Body of pancreas (tissue), 4 donors: ENCODE measurements at regions of chr7 and their contacts with region 1.

Region 1: GRCh38 chr7:27196287-27196767 is 3.6 kb downstream of the HOXA13 start:
- DNase-seq: peak; percentile 70 to 86 (median 80)
- ATAC-seq: no peak
- H3K4me3 ChIP-seq: no peak overlapping the region
- H3K27ac ChIP-seq: no peak overlapping the region
- H3K4me1 ChIP-seq: peaks cover 44% of the 10 kb centered on the region
- H3K27me3 ChIP-seq: peaks cover 0 to 92% of the 10 kb centered on the region in 2 donors
- CTCF ChIP-seq: peak; percentile 38 to 81 (median 76)
- POLR2A ChIP-seq: no peak

Region 2: GRCh38 chr7:26667500-26668133 is 528.7 kb before region 1 on chr7:
- intact Hi-C with region 1: no loop called
- DNase-seq: peak; percentile 72 to 90 (median 80)
- ATAC-seq: peak; percentile 92
- H3K4me3 ChIP-seq: no peak overlapping the region
- H3K27ac ChIP-seq: no peak overlapping the region
- H3K4me1 ChIP-seq: no peaks in the 10 kb centered on the region
- H3K27me3 ChIP-seq: no peaks in the 10 kb centered on the region
- CTCF ChIP-seq: peak; percentile 59 to 97 (median 93)
- POLR2A ChIP-seq: no peak

Region 3: GRCh38 chr7:26880852-26881251 is 315.5 kb before region 1 on chr7:
- intact Hi-C with region 1: no loop called
- DNase-seq: no peak
- ATAC-seq: no peak
- H3K4me3 ChIP-seq: no peak overlapping the region
- H3K27ac ChIP-seq: no peak overlapping the region
- H3K4me1 ChIP-seq: no peaks in the 10 kb centered on the region
- H3K27me3 ChIP-seq: peaks cover 0 to 2% of the 10 kb centered on the region in 2 donors
- CTCF ChIP-seq: no peak
- POLR2A ChIP-seq: no peak

Region 4: GRCh38 chr7:27389496-27389895 is 193.2 kb after region 1 on chr7:
- intact Hi-C with region 1: no loop called
- DNase-seq: no peak
- ATAC-seq: no peak
- H3K4me3 ChIP-seq: no peak overlapping the region
- H3K27ac ChIP-seq: no peak overlapping the region
- H3K4me1 ChIP-seq: no peaks in the 10 kb centered on the region
- H3K27me3 ChIP-seq: no peaks in the 10 kb centered on the region
- CTCF ChIP-seq: no peak
- POLR2A ChIP-seq: no peak

Region 5: DNA sequence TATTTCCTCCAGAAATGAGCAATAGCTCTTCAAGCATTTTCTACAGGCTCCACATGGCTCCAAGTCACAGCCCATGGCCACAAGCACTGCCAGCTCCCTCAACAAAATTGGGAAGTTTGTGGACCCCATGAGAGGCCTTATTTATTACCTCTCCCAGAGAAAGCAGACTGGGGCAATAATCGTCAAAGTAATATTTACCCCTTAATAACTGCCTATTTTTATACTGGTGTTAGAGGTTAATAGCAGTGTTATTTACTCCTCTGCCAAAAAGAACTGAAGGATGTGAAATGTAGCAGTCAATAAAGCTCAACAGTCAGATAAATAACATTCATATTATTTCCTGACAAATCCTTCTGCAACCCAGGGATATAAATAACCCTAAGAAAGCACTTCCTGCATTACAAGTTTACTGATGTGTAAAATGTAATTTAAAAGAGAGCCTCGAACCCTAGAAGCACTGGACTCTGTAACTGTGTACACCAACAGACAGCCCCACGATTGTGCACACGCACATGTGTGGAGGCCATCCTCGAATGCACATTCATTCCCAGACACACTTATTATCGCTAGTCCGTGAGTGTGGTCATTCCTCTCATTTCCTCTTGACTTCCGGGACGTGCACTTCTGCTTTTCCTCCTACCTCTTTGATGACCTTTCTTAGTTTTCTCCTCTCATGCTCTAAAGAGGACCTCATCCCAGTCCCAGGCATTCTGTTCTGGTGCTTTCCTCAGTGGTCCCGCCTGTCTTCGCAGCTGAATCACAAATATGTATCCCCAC is 203.7 kb after region 1 on chr7:
- intact Hi-C with region 1: no loop called
- DNase-seq: no peak
- ATAC-seq: no peak
- H3K4me3 ChIP-seq: no peak overlapping the region
- H3K27ac ChIP-seq: no peak overlapping the region
- H3K4me1 ChIP-seq: no peaks in the 10 kb centered on the region
- H3K27me3 ChIP-seq: no peaks in the 10 kb centered on the region
- CTCF ChIP-seq: no peak
- POLR2A ChIP-seq: no peak

Region 6: DNA sequence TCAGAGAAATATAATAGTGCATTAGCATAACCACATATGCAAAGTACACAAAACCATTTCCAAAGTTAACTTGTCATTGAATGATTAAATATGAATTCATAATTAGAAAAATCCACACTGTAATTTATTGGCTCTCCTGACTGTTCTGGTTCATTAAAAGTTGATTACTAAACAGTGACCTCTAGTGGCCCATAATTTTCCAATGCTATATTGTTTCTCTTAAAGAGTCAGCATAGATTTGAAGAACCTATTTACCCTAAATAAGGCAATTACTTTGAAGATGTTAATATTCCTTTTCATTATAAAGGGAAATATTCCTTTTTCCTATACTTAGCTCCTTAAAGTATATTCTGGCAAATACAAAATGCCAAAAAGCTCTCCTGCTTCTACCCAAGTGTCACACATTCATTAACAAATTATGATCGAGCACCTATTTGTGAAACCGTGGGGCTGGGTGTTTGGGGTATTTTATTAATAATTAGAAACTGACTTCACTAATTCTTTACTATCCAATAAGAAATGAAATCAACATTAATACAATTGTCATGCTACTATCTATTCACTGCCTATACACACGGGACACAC is 380.1 kb after region 1 on chr7:
- intact Hi-C with region 1: loop called (anchors 10 kb)
- DNase-seq: no peak
- ATAC-seq: no peak
- H3K4me3 ChIP-seq: no peak overlapping the region
- H3K27ac ChIP-seq: no peak overlapping the region
- H3K4me1 ChIP-seq: no peaks in the 10 kb centered on the region
- H3K27me3 ChIP-seq: no peaks in the 10 kb centered on the region
- CTCF ChIP-seq: peak; percentile 33 to 76 (median 54)
- POLR2A ChIP-seq: no peak

Region 7: DNA sequence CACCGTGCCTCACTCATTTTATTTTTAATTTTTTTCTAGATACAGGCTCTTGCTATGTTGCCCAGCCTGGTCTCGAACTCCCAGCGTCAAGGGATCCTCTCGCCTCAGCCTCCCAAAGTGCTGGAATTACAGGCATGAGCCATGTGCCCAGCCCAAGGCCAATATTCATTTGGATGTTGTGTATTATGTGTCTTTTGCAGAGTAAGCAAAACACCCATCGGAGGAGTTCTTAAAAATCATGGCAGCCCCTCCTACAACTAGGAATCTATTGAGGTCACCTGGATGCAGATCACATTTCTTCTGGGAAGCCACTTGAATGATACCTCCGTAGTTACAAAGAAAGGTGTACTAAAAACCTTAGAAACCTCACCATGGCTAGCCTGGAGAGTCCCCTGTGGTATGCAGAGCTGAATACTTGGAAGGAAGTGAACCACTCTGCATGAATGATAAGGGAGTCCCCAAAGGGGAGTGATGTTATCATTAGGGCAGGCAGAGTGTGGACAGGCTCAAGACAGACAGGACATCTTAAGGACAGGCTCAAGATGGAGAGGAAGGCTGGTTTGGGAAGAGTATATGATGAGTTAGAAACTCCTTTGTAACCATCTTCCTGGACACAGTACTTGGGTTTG is 729.4 kb after region 1 on chr7:
- intact Hi-C with region 1: loop called (anchors 5 kb)
- DNase-seq: no peak
- ATAC-seq: no peak
- H3K4me3 ChIP-seq: no peak overlapping the region
- H3K27ac ChIP-seq: no peak overlapping the region
- H3K4me1 ChIP-seq: peaks cover 8% of the 10 kb centered on the region
- H3K27me3 ChIP-seq: no peaks in the 10 kb centered on the region
- CTCF ChIP-seq: no peak
- POLR2A ChIP-seq: no peak

Region 8: GRCh38 chr7:28020302-28020940 is 824.1 kb after region 1 on chr7:
- intact Hi-C with region 1: loop called (anchors 10 kb)
- DNase-seq: peak; percentile 55 to 76 (median 64)
- ATAC-seq: peak; percentile 85
- H3K4me3 ChIP-seq: no peak overlapping the region
- H3K27ac ChIP-seq: no peak overlapping the region
- H3K4me1 ChIP-seq: peaks cover 3% of the 10 kb centered on the region
- H3K27me3 ChIP-seq: no peaks in the 10 kb centered on the region
- CTCF ChIP-seq: peak; percentile 65 to 95 (median 88)
- POLR2A ChIP-seq: no peak

Region 9: GRCh38 chr7:28078036-28078901 is 881.9 kb after region 1 on chr7:
- intact Hi-C with region 1: loop called (anchors 10 kb)
- DNase-seq: peak; percentile 30 to 50 (median 38)
- ATAC-seq: peak; percentile 52
- H3K4me3 ChIP-seq: no peak overlapping the region
- H3K27ac ChIP-seq: no peak overlapping the region
- H3K4me1 ChIP-seq: no peaks in the 10 kb centered on the region
- H3K27me3 ChIP-seq: no peaks in the 10 kb centered on the region
- CTCF ChIP-seq: peak; percentile 78 to 99 (median 83)
- POLR2A ChIP-seq: no peak

Region 10: GRCh38 chr7:28096713-28097112 is 900.4 kb after region 1 on chr7:
- intact Hi-C with region 1: loop called (anchors 10 kb)
- DNase-seq: peak; percentile 49 to 71 (median 57)
- ATAC-seq: peak; percentile 67
- H3K4me3 ChIP-seq: no peak overlapping the region
- H3K27ac ChIP-seq: no peak overlapping the region
- H3K4me1 ChIP-seq: no peaks in the 10 kb centered on the region
- H3K27me3 ChIP-seq: no peaks in the 10 kb centered on the region
- CTCF ChIP-seq: peak; percentile 52 to 82 (median 74)
- POLR2A ChIP-seq: no peak